Posterior cingulate gyrus (tissue), 11 donors: ENCODE measurements at regions of chr18 and their contacts with region 1.

Region 1: GRCh38 chr18:8389391-8390340 is 219.6 kb upstream of the RAB12 start:
- DNase-seq: peak; percentile 34 to 95 (median 74)

Region 2: GRCh38 chr18:7272311-7273049 is 1117.2 kb before region 1 on chr18:
- intact Hi-C with region 1: loop called (anchors 2 kb)
- DNase-seq: peak; percentile 47 to 93 (median 73)

Region 3: DNA sequence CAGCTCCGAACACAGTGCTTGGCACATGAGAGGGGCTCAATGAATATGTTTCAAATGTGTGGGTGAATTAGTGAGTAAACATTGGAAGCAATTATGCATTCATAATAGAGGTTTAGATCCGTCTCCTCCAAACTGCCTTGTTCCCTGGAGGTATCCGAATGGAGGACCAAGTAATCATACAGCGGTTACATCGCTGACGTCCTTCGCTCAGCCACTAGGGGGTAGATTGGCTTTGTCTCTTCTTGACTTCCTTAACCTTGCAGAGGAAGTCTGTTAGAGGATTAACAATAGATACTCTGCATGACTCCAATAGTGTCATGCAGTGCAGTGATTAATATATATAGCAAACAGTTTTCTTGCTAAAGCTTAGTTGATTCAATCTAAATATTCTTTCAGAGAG is 305.5 kb before region 1 on chr18:
- intact Hi-C with region 1: loop called (anchors 10 kb)
- DNase-seq: peak in 1 of 10 donors; percentile 14